Right lobe of liver (tissue), 6 donors: ENCODE measurements at regions of chr1 and their contacts with region 1.

Region 1: GRCh38 chr1:12596007-12596821 is 21.8 kb downstream of the DHRS3 start:
- DNase-seq: peak; percentile 96 to 97 (median 97)
- ATAC-seq: peak; percentile 68 to 80 (median 77)
- H3K4me3 ChIP-seq: peak overlapping the region; percentile 26 to 37 (median 34)
- H3K27ac ChIP-seq: peak overlapping the region; percentile 86 to 96 (median 89)
- H3K4me1 ChIP-seq: peaks cover 3 to 93% (median 47%) of the 10 kb centered on the region in 4 donors
- H3K27me3 ChIP-seq: no peaks in the 10 kb centered on the region
- CTCF ChIP-seq: no peak
- POLR2A ChIP-seq: peak; percentile 35

Region 2: GRCh38 chr1:12454406-12455391 is 141.5 kb before region 1 on chr1:
- intact Hi-C with region 1: no loop called
- DNase-seq: no peak
- ATAC-seq: peak in 2 of 4 donors; percentile 10 to 23
- H3K4me3 ChIP-seq: no peak overlapping the region
- H3K27ac ChIP-seq: peak overlapping the region; percentile 47 to 84 (median 66)
- H3K4me1 ChIP-seq: peaks cover 0 to 64% (median 28%) of the 10 kb centered on the region in 4 donors
- H3K27me3 ChIP-seq: no peaks in the 10 kb centered on the region
- CTCF ChIP-seq: no peak
- POLR2A ChIP-seq: no peak

Region 3: DNA sequence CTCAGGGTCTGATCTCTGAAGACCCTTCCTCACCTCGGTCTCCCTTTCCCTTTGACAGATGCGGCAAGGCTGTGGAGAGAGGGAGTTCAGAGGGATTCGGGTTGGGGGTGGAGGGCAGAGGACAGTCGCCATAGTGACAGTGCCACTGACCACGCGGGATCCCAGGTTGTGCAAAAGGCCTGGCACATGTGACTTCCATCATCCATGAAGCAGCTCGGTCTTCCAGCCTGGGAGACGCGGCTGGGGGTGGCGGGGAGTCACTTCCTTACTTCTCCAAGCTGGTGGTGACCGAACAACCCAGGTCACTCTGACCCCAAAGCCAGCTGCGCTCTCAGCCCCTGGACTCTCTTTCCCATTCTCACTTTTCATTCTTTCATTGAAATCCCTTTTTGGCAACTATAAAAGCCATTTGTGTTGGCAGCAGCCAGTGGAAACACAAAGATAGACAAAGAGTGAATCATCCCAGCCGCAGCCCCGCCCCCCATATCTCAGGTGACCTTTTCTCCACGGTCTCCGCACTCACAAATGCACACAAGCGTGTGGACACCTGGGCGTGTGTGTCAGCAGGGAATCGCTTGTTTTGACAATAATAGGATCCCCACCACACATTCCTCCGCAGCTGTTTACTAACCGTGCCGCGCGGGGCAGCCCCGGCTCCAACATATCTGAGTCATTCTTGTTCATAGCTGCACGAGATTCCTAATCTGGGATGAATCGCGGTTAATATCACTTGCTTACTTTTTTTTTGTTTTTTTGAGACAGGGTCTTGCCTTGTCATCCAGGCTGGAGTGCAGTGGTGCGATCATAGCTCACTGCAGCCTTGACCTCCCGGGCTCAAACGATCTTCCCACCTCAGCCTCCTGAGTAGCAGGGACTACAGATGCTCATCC is 46.5 kb before region 1 on chr1:
- intact Hi-C with region 1: loop called in 1 of 2 experiments (anchors 10 kb)
- DNase-seq: peak; percentile 64 to 72 (median 71)
- ATAC-seq: peak; percentile 66 to 85 (median 68)
- H3K4me3 ChIP-seq: no peak overlapping the region
- H3K27ac ChIP-seq: peak overlapping the region in 2 of 3 donors; percentile 18 to 38
- H3K4me1 ChIP-seq: peaks cover 0 to 6% (median 0%) of the 10 kb centered on the region in 4 donors
- H3K27me3 ChIP-seq: no peaks in the 10 kb centered on the region
- CTCF ChIP-seq: no peak
- POLR2A ChIP-seq: no peak